ENCODE measurements at regions of chr1 and their contacts with region 1.

Region 1: GRCh38 chr1:101136739-101137138 is 100.1 kb upstream of the S1PR1 start:
- DNase-seq: no peak
- ATAC-seq: peak; percentile 80
- H3K4me3 Mint-ChIP-seq: peak overlapping the region; percentile 12
- H3K27ac Mint-ChIP-seq: peak overlapping the region; percentile 10
- H3K4me1 Mint-ChIP-seq: peaks cover 52% of the 10 kb centered on the region
- H3K27me3 Mint-ChIP-seq: no peaks in the 10 kb centered on the region
- CTCF ChIP-seq: no peak

Region 2: GRCh38 chr1:100921109-100921706 is 215.5 kb before region 1 on chr1:
- CTCF ChIA-PET with region 1: interaction called, 4 read pairs
- POLR2A ChIA-PET with region 1: no interaction called
- intact Hi-C with region 1: loop called (anchors 1 kb)
- DNase-seq: no peak
- ATAC-seq: no peak
- H3K4me3 Mint-ChIP-seq: no peak overlapping the region
- H3K27ac Mint-ChIP-seq: no peak overlapping the region
- H3K4me1 Mint-ChIP-seq: peaks cover 24% of the 10 kb centered on the region
- H3K27me3 Mint-ChIP-seq: no peaks in the 10 kb centered on the region
- CTCF ChIP-seq: peak; percentile 98

Region 3: GRCh38 chr1:100941098-100941527 is 195.6 kb before region 1 on chr1:
- CTCF ChIA-PET with region 1: no interaction called
- POLR2A ChIA-PET with region 1: no interaction called
- intact Hi-C with region 1: no loop called
- DNase-seq: no peak
- ATAC-seq: no peak
- H3K4me3 Mint-ChIP-seq: no peak overlapping the region
- H3K27ac Mint-ChIP-seq: no peak overlapping the region
- H3K4me1 Mint-ChIP-seq: peaks cover 38% of the 10 kb centered on the region
- H3K27me3 Mint-ChIP-seq: no peaks in the 10 kb centered on the region
- CTCF ChIP-seq: no peak

Region 4: GRCh38 chr1:101198842-101199636 is 62.3 kb after region 1 on chr1:
- CTCF ChIA-PET with region 1: no interaction called
- POLR2A ChIA-PET with region 1: interaction called, 3 read pairs
- intact Hi-C with region 1: loop called (anchors 5 kb)
- DNase-seq: no peak
- ATAC-seq: peak; percentile 91
- H3K4me3 Mint-ChIP-seq: peak overlapping the region; percentile 11
- H3K27ac Mint-ChIP-seq: peak overlapping the region; percentile 9
- H3K4me1 Mint-ChIP-seq: peaks cover 16% of the 10 kb centered on the region
- H3K27me3 Mint-ChIP-seq: no peaks in the 10 kb centered on the region
- CTCF ChIP-seq: no peak

Region 5: GRCh38 chr1:101567582-101568189 is 430.9 kb after region 1 on chr1:
- CTCF ChIA-PET with region 1: no interaction called
- POLR2A ChIA-PET with region 1: no interaction called
- intact Hi-C with region 1: loop called (anchors 2 kb)
- DNase-seq: peak; percentile 17
- ATAC-seq: peak; percentile 76
- H3K4me3 Mint-ChIP-seq: no peak overlapping the region
- H3K27ac Mint-ChIP-seq: no peak overlapping the region
- H3K4me1 Mint-ChIP-seq: no peaks in the 10 kb centered on the region
- H3K27me3 Mint-ChIP-seq: peaks cover 14% of the 10 kb centered on the region
- CTCF ChIP-seq: peak; percentile 99

Measured in activated B cell treated with CpG ODN at 0.5 μM for 24 hours (primary cell).